CD14-positive monocyte (primary cell): ENCODE measurements at regions of chr15 and their contacts with region 1.

Region 1: DNA sequence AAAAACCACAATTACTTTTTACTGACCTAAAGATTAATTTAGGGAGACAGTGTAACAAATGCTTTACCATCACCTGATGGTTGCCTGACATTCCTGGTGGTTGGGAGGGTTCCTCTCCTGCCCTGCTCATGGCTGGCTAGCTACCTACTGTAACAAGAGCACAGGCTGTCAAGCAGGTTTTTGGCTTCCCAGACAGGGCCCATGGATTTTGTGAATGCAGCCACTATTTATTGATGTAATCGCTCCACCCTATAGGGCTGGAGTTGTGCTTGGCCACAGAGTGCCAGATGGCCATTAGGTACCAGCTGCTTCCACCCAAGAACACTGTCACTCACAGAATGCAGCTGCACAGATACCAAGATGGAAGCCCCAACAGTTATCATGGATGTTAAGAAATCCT is 31.0 kb upstream of the KLHL25 start:
- DNase-seq: no peak
- H3K4me3 ChIP-seq: no peak overlapping the region
- H3K4me3 Mint-ChIP-seq: no peak overlapping the region
- H3K27ac ChIP-seq: no peak overlapping the region
- H3K27ac Mint-ChIP-seq: no peak overlapping the region
- H3K4me1 ChIP-seq: no peaks in the 10 kb centered on the region
- H3K4me1 Mint-ChIP-seq: peaks cover 6% of the 10 kb centered on the region
- H3K27me3 ChIP-seq: no peaks in the 10 kb centered on the region
- H3K27me3 Mint-ChIP-seq: peaks cover 4 to 8% (median 4%) of the 10 kb centered on the region in 3 donors
- CTCF ChIP-seq: no peak

Region 2: DNA sequence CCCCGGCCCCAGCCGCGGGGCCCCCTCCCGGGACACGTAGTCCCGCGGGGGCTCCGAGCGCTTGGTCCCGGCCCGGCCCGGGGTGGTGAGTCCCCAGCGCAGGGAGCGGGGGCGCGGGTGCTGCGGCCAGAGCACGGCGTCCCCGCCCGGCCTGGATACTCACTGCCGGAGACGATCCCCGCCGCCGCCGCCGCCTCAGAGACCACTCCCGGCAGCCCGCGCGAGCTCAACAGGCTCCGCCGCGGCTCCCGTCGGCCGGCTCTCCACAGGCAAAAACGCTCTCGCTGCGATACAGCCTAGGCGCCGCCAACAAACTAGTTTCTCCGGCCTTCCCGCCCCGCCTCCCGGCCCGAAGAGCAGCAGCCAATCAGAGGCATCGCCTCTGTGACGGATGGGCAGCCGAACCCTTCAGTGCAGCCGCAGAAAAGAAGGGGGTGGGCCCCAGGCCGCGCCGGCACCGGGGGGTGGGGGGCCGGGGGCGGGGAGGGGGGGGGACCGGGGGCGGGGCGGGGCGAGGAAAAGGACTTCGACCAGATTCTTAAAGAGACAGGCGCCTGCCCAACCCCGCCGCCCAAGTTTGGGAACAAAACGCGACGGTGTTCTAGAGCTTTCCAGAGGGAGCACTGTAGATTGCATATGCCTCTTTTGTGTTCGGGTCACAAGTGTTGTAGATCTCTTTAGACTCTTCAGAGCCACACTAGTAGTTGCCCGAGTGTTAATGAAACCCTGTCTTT is 30.9 kb before region 1 on chr15 and contains the start of gene KLHL25:
- intact Hi-C with region 1: loop called in 1 of 2 experiments (anchors 5 kb)
- DNase-seq: peak; percentile 88 to 92 (median 92)
- H3K4me3 ChIP-seq: peak within 1 kb of the TSS; percentile 47 to 87 (median 55)
- H3K4me3 Mint-ChIP-seq: peak within 1 kb of the TSS; percentile 82 to 94
- H3K27ac ChIP-seq: no peak within 1 kb of the TSS
- H3K27ac Mint-ChIP-seq: peak within 1 kb of the TSS in 4 of 7 donors; percentile 19 to 75 (median 40)
- H3K4me1 ChIP-seq: peaks cover 13 to 20% of the 10 kb centered on the region in 2 donors
- H3K4me1 Mint-ChIP-seq: peaks cover 21% of the 10 kb centered on the region
- H3K27me3 ChIP-seq: peaks cover 8 to 23% of the 10 kb centered on the region in 2 donors
- H3K27me3 Mint-ChIP-seq: peaks cover 32 to 45% (median 37%) of the 10 kb centered on the region in 3 donors
- CTCF ChIP-seq: no peak
- polyA plus RNA-seq, gene KLHL25: 0.27 to 0.60 (median 0.40) TPM

Region 3: DNA sequence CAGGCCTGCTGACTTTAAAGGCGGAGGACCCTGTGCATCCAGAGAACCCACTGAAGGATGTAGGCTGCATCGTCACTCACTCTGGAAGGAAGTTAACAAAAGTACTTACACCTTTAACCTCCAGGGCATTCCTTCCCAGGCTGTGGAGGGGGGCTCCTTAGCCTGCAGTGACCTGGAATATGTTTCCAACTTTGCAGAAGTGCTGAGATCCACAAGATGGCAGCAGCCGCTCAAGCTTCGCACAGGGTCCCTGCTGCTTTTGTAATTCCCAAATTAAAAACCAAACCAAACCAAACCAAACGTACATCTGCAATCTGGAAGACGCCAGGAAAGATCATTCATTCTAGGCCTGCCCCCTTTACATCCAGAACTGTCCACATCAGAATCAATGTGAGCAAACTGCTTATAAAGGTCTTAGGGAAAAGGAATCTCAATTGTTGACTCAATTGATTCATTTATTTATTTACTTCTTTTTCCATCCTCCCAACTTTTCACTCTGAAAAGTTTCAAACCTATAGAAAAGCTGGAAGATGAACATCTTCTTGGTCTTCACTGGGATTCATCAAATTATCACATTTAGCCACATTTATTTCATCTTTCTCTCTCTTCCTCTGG is 39.5 kb after region 1 on chr15:
- intact Hi-C with region 1: no loop called
- DNase-seq: no peak
- H3K4me3 ChIP-seq: no peak overlapping the region
- H3K4me3 Mint-ChIP-seq: no peak overlapping the region
- H3K27ac ChIP-seq: no peak overlapping the region
- H3K27ac Mint-ChIP-seq: no peak overlapping the region
- H3K4me1 ChIP-seq: no peaks in the 10 kb centered on the region
- H3K4me1 Mint-ChIP-seq: no peaks in the 10 kb centered on the region
- H3K27me3 ChIP-seq: peaks cover 0 to 2% of the 10 kb centered on the region in 2 donors
- H3K27me3 Mint-ChIP-seq: peaks cover 9 to 16% (median 13%) of the 10 kb centered on the region in 3 donors
- CTCF ChIP-seq: no peak

Region 4: GRCh38 chr15:86040356-86041033 is 214.8 kb after region 1 on chr15:
- intact Hi-C with region 1: no loop called
- DNase-seq: no peak
- H3K4me3 ChIP-seq: no peak overlapping the region
- H3K4me3 Mint-ChIP-seq: no peak overlapping the region
- H3K27ac ChIP-seq: no peak overlapping the region
- H3K27ac Mint-ChIP-seq: no peak overlapping the region
- H3K4me1 ChIP-seq: no peaks in the 10 kb centered on the region
- H3K4me1 Mint-ChIP-seq: no peaks in the 10 kb centered on the region
- H3K27me3 ChIP-seq: no peaks in the 10 kb centered on the region
- H3K27me3 Mint-ChIP-seq: peaks cover 0 to 5% (median 3%) of the 10 kb centered on the region in 3 donors
- CTCF ChIP-seq: no peak